B cell (primary cell): ENCODE measurements at regions of chr4 and their contacts with region 1.

Region 1: GRCh38 chr4:145618932-145619638 is at the start of gene MMAA:
- DNase-seq: peak; percentile 95
- ATAC-seq: peak; percentile 93
- H3K4me3 ChIP-seq: peak within 1 kb of the TSS; percentile 66 to 96 (median 83)
- H3K4me3 Mint-ChIP-seq: peak within 1 kb of the TSS; percentile 90
- H3K27ac ChIP-seq: peak within 1 kb of the TSS; percentile 86 to 94
- H3K27ac Mint-ChIP-seq: peak within 1 kb of the TSS; percentile 95
- H3K4me1 ChIP-seq: peaks cover 10 to 17% of the 10 kb centered on the region in 2 donors
- H3K4me1 Mint-ChIP-seq: peaks cover 28% of the 10 kb centered on the region
- H3K27me3 ChIP-seq: no peaks in the 10 kb centered on the region
- H3K27me3 Mint-ChIP-seq: no peaks in the 10 kb centered on the region
- CTCF ChIP-seq: peak; percentile 63
- total RNA-seq, gene MMAA: 7.8 and 9.0 TPM in 2 replicates

Region 2: GRCh38 chr4:145180298-145181090 is 438.6 kb before region 1 on chr4 and contains the start of gene OTUD4:
- CTCF ChIA-PET with region 1: interaction called, 13 read pairs
- POLR2A ChIA-PET with region 1: no interaction called
- intact Hi-C with region 1: loop called (anchors 1 kb)
- DNase-seq: peak; percentile 97
- ATAC-seq: peak; percentile 82
- H3K4me3 ChIP-seq: peak within 1 kb of the TSS; percentile 68 to 93 (median 81)
- H3K4me3 Mint-ChIP-seq: peak within 1 kb of the TSS; percentile 94
- H3K27ac ChIP-seq: peak within 1 kb of the TSS; percentile 94 to 97
- H3K27ac Mint-ChIP-seq: peak within 1 kb of the TSS; percentile 96
- H3K4me1 ChIP-seq: peaks cover 29 to 35% of the 10 kb centered on the region in 2 donors
- H3K4me1 Mint-ChIP-seq: peaks cover 34% of the 10 kb centered on the region
- H3K27me3 ChIP-seq: no peaks in the 10 kb centered on the region
- H3K27me3 Mint-ChIP-seq: no peaks in the 10 kb centered on the region
- CTCF ChIP-seq: peak; percentile 31
- total RNA-seq, gene OTUD4: 51.0 and 55.7 TPM in 2 replicates

Region 3: GRCh38 chr4:145481164-145481941 is 137.7 kb before region 1 on chr4 and contains the start of gene SMAD1:
- CTCF ChIA-PET with region 1: no interaction called
- POLR2A ChIA-PET with region 1: no interaction called
- intact Hi-C with region 1: loop called (anchors 10 kb)
- DNase-seq: peak; percentile 44
- ATAC-seq: peak; percentile 28
- H3K4me3 ChIP-seq: peak within 1 kb of the TSS; percentile 25 to 62 (median 48)
- H3K4me3 Mint-ChIP-seq: peak within 1 kb of the TSS; percentile 83
- H3K27ac ChIP-seq: no peak within 1 kb of the TSS
- H3K27ac Mint-ChIP-seq: no peak within 1 kb of the TSS
- H3K4me1 ChIP-seq: peaks cover 14 to 24% of the 10 kb centered on the region in 2 donors
- H3K4me1 Mint-ChIP-seq: peaks cover 8% of the 10 kb centered on the region
- H3K27me3 ChIP-seq: peaks cover 0 to 69% (median 53%) of the 10 kb centered on the region in 4 experiments
- H3K27me3 Mint-ChIP-seq: peaks cover 50% of the 10 kb centered on the region
- CTCF ChIP-seq: no peak
- total RNA-seq, gene SMAD1: not detected in 2 replicates

Region 4: GRCh38 chr4:145501051-145501660 is 117.9 kb before region 1 on chr4:
- CTCF ChIA-PET with region 1: no interaction called
- POLR2A ChIA-PET with region 1: no interaction called
- intact Hi-C with region 1: no loop called
- DNase-seq: no peak
- ATAC-seq: no peak
- H3K4me3 ChIP-seq: no peak overlapping the region
- H3K4me3 Mint-ChIP-seq: no peak overlapping the region
- H3K27ac ChIP-seq: no peak overlapping the region
- H3K27ac Mint-ChIP-seq: no peak overlapping the region
- H3K4me1 ChIP-seq: peaks cover 0 to 4% of the 10 kb centered on the region in 2 donors
- H3K4me1 Mint-ChIP-seq: peaks cover 12% of the 10 kb centered on the region
- H3K27me3 ChIP-seq: peaks cover 0 to 7% (median 2%) of the 10 kb centered on the region in 4 experiments
- H3K27me3 Mint-ChIP-seq: peaks cover 34% of the 10 kb centered on the region
- CTCF ChIP-seq: no peak

Region 5: GRCh38 chr4:145589916-145590702 is 29.0 kb before region 1 on chr4:
- CTCF ChIA-PET with region 1: no interaction called
- POLR2A ChIA-PET with region 1: no interaction called
- intact Hi-C with region 1: no loop called
- DNase-seq: no peak
- ATAC-seq: no peak
- H3K4me3 ChIP-seq: no peak overlapping the region
- H3K4me3 Mint-ChIP-seq: no peak overlapping the region
- H3K27ac ChIP-seq: no peak overlapping the region
- H3K27ac Mint-ChIP-seq: no peak overlapping the region
- H3K4me1 ChIP-seq: no peaks in the 10 kb centered on the region
- H3K4me1 Mint-ChIP-seq: no peaks in the 10 kb centered on the region
- H3K27me3 ChIP-seq: peaks cover 0 to 9% (median 0%) of the 10 kb centered on the region in 4 experiments
- H3K27me3 Mint-ChIP-seq: peaks cover 21% of the 10 kb centered on the region
- CTCF ChIP-seq: no peak

Region 6: DNA sequence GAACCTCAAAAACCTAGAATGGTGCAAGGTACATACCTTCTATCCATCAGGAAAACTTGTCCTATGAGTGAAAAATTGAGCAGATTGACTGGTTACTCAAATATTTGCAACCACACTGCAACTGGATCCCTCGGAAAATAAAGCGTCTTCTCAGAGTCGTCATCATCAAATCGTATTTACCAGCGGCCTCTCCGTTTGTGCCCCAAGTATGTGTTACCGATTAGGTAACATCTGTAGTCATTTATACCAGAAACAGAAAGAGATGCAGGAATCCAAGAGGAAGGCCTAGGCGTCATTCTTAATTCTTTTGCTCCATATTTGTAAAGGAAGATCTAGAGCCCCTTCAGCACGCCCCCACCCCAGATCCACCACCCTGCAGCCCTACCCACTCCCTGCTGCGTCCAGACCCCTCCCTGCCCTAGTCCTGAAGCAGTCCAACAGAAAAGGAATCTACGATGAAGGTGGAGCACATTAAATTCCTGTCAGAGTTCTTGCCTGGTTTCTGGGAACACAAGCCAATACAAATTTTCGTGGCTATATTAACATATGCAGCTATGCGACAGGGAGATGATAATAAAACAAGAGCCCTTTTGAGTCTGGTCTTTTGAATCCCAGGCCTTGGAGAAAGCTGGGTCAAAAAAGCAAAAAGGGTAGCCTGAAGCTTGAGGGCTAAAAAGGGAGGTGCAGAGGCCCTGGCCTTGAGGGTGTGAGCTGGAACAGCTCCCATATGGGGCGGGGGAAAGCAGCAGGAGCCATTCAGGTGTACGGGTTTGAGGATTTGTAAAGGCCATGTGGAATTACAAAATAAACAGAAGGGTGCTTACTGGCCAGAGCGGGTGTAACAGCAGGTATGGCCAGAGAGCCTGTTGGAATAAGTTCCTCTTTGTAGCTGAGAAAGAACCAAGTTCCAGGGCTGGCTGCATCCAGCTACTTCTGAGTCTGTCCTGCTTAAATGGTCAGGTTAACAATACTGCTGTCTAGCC is 242.5 kb after region 1 on chr4:
- CTCF ChIA-PET with region 1: no interaction called
- POLR2A ChIA-PET with region 1: no interaction called
- intact Hi-C with region 1: no loop called
- DNase-seq: no peak
- ATAC-seq: no peak
- H3K4me3 ChIP-seq: no peak overlapping the region
- H3K4me3 Mint-ChIP-seq: no peak overlapping the region
- H3K27ac ChIP-seq: no peak overlapping the region
- H3K27ac Mint-ChIP-seq: no peak overlapping the region
- H3K4me1 ChIP-seq: no peaks in the 10 kb centered on the region
- H3K4me1 Mint-ChIP-seq: peaks cover 8% of the 10 kb centered on the region
- H3K27me3 ChIP-seq: no peaks in the 10 kb centered on the region
- H3K27me3 Mint-ChIP-seq: no peaks in the 10 kb centered on the region
- CTCF ChIP-seq: no peak

Region 7: GRCh38 chr4:146175541-146176453 is 556.7 kb after region 1 on chr4 and contains the start of gene LSM6:
- CTCF ChIA-PET with region 1: no interaction called
- POLR2A ChIA-PET with region 1: no interaction called
- intact Hi-C with region 1: loop called (anchors 2 kb)
- DNase-seq: peak; percentile 90
- ATAC-seq: peak; percentile 93
- H3K4me3 ChIP-seq: peak within 1 kb of the TSS; percentile 66 to 94 (median 85)
- H3K4me3 Mint-ChIP-seq: peak within 1 kb of the TSS; percentile 85
- H3K27ac ChIP-seq: peak within 1 kb of the TSS; percentile 73 to 87
- H3K27ac Mint-ChIP-seq: peak within 1 kb of the TSS; percentile 95
- H3K4me1 ChIP-seq: peaks cover 17 to 36% of the 10 kb centered on the region in 2 donors
- H3K4me1 Mint-ChIP-seq: peaks cover 48% of the 10 kb centered on the region
- H3K27me3 ChIP-seq: no peaks in the 10 kb centered on the region
- H3K27me3 Mint-ChIP-seq: no peaks in the 10 kb centered on the region
- CTCF ChIP-seq: no peak
- total RNA-seq, gene LSM6: 42.1 and 42.7 TPM in 2 replicates

Region 8: DNA sequence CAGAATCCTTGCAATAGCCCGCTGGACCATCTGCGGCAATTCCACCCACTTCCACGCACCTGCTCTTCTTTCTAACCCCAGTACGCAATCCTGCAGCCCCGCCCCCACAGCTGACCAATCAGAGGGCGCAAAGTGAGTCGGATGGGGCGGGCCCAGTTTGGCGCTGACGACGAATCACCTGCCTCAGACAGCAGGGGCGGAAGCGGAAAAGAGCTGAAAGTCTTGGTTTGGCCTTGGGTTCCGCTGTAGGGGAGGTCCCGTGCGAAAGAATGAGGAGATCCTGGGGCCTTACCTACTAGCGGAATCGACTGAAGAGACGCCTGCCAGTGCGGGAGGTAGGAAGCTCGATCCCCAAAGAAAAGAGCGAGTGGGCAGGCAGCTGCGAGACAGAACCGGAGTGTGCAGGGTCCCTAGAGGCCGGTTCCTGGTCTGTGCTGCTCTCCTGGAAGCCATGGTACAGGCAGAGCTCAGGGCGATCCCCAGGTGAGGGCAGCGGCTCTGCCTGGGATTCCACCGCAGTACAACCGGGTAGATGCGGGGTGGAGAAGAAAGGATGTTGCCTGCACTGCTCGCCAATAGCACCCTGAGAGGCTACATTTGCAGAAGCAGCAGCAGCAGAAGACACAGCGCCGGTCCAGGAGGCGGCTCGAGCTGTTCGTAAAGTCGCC is 1998.2 kb after region 1 on chr4 and contains the start of gene TMEM184C:
- CTCF ChIA-PET with region 1: no interaction called
- POLR2A ChIA-PET with region 1: no interaction called
- intact Hi-C with region 1: loop called (anchors 2 kb)
- DNase-seq: peak; percentile 97
- ATAC-seq: peak; percentile 97
- H3K4me3 ChIP-seq: peak within 1 kb of the TSS; percentile 72 to 92 (median 89)
- H3K4me3 Mint-ChIP-seq: peak within 1 kb of the TSS; percentile 92
- H3K27ac ChIP-seq: peak within 1 kb of the TSS; percentile 77 to 94
- H3K27ac Mint-ChIP-seq: peak within 1 kb of the TSS; percentile 92
- H3K4me1 ChIP-seq: peaks cover 19 to 27% of the 10 kb centered on the region in 2 donors
- H3K4me1 Mint-ChIP-seq: peaks cover 37% of the 10 kb centered on the region
- H3K27me3 ChIP-seq: peaks cover 0 to 4% (median 0%) of the 10 kb centered on the region in 4 experiments
- H3K27me3 Mint-ChIP-seq: peaks cover 8% of the 10 kb centered on the region
- CTCF ChIP-seq: no peak
- total RNA-seq, gene TMEM184C: 25.8 and 27.5 TPM in 2 replicates